PC-9 (cell line): ENCODE measurements at regions of chr1 and their contacts with region 1.

Region 1: GRCh38 chr1:153677718-153678505 is 576 bp upstream of the NPR1 start:
- DNase-seq: peak in 1 of 2 experiments; percentile 38
- H3K4me3 ChIP-seq: peak overlapping the region; percentile 39; the same call in 1 of the 2 replicates
- H3K27ac ChIP-seq: no peak overlapping the region
- H3K4me1 ChIP-seq: no peaks in the 10 kb centered on the region
- H3K27me3 ChIP-seq: peaks cover 9% of the 10 kb centered on the region; the same call in 1 of the 2 replicates
- CTCF ChIP-seq: peak; percentile 94

Region 2: DNA sequence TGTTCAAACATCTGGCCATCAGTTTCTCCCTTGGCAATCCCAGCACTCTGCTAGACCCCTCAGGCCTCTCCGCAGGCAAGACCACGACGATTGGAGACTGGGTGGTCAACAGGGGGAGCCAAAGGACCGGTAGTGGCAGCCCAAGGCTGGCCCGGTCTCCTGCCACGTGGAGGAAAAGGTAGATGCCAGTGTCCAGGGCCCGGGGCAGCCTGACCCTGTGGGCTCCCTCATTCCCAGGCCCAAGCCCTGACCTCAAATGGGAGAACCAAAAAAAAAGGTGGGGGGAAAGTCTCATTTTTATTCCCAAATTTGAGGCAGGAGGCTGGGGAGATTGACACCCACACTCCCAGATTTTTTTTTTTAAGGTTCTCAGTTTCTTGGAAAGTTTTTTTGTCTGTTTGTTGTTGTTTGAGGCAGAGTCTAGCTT is 166.9 kb before region 1 on chr1:
- CTCF ChIA-PET with region 1: no interaction called
- POLR2A ChIA-PET with region 1: no interaction called
- intact Hi-C with region 1: no loop called
- DNase-seq: peak; percentile 52 to 82
- H3K4me3 ChIP-seq: no peak overlapping the region
- H3K27ac ChIP-seq: no peak overlapping the region
- H3K4me1 ChIP-seq: peaks cover 51% of the 10 kb centered on the region
- H3K27me3 ChIP-seq: no peaks in the 10 kb centered on the region
- CTCF ChIP-seq: peak; percentile 96

Region 3: GRCh38 chr1:153727463-153728304 is 49.8 kb after region 1 on chr1 and contains the start of gene INTS3:
- CTCF ChIA-PET with region 1: no interaction called
- POLR2A ChIA-PET with region 1: interaction called, 4 read pairs
- intact Hi-C with region 1: loop called (anchors 5 kb)
- DNase-seq: peak; percentile 99
- H3K4me3 ChIP-seq: peak within 1 kb of the TSS; percentile 94
- H3K27ac ChIP-seq: peak within 1 kb of the TSS; percentile 84
- H3K4me1 ChIP-seq: peaks cover 21% of the 10 kb centered on the region
- H3K27me3 ChIP-seq: no peaks in the 10 kb centered on the region
- CTCF ChIP-seq: peak; percentile 24; the same call in 1 of the 2 replicates
- total RNA-seq, gene INTS3: 62.5 and 91.7 TPM in 2 replicates